ENCODE measurements at regions of chr3 and their contacts with region 1.

Region 1: GRCh38 chr3:126850370-126851085 is 132.4 kb upstream of the PLXNA1 start:
- DNase-seq: peak in 3 of 5 donors; percentile 33 to 58 (median 40)
- ATAC-seq: peak; percentile 80 to 91 (median 86)
- H3K4me3 ChIP-seq: no peak overlapping the region
- H3K27ac ChIP-seq: peak overlapping the region in 9 of 12 donors; percentile 2 to 73 (median 49)
- H3K4me1 ChIP-seq: peaks cover 0 to 26% (median 11%) of the 10 kb centered on the region in 12 donors
- H3K27me3 ChIP-seq: no peaks in the 10 kb centered on the region
- CTCF ChIP-seq: no peak
- POLR2A ChIP-seq: no peak

Region 2: DNA sequence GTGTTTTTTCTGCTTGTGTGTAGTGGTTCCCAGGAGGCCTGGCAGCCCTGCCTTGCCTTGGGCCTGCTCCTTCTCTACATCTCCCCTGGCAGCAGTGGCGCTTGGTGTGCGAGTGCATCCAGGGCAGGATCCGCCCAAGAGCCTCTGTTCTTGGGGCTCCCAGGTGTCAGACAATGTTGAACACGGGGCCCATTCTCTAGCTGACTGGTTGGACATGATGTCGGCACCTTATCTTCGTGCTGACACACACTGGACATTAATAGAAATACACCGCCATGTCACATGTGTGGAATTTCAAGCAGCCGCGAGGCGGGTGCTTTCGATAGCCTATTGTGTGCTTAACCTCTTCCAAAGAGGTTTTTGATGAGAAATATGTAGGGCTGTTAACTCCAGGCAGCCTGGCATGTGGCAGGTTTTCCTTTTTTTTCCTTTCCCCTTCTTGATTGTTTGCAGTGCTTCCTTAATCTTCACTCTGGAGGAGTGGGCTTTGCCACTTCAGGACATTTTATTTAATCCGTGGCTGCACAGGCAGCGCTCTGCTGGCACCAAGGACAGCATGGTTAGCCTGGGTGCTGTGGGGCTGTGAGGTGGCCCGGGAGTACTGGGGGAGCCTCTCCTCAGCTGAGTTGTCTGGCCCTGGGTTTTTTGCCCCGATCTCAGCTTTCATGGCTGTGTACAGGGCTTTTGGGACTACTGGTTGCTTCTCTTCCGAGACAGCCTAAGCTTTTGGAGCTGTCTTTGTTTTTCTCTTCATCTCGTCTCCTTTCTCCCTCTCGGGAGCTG is 103.9 kb before region 1 on chr3:
- intact Hi-C with region 1: loop called in 1 of 10 experiments (anchors 5 kb)
- DNase-seq: peak in 4 of 5 donors; percentile 72 to 85 (median 78)
- ATAC-seq: peak; percentile 89 to 94 (median 92)
- H3K4me3 ChIP-seq: peak overlapping the region in 6 of 12 donors; percentile 2 to 24 (median 14)
- H3K27ac ChIP-seq: peak overlapping the region; percentile 61 to 98 (median 88)
- H3K4me1 ChIP-seq: peaks cover 0 to 47% (median 20%) of the 10 kb centered on the region in 12 donors
- H3K27me3 ChIP-seq: no peaks in the 10 kb centered on the region
- CTCF ChIP-seq: peak in 3 of 12 donors; percentile 9 to 21 (median 19)
- POLR2A ChIP-seq: no peak

Measured in heart left ventricle (tissue), 16 donors.